Left cardiac atrium (tissue), 4 donors: ENCODE measurements at regions of chr21 and their contacts with region 1.

Region 1: GRCh38 chr21:46144464-46145070 is 10.8 kb downstream of the FTCD start:
- DNase-seq: no peak
- ATAC-seq: no peak

Region 2: GRCh38 chr21:45820171-45821091 is 324.1 kb before region 1 on chr21:
- intact Hi-C with region 1: no loop called
- DNase-seq: peak; percentile 80
- ATAC-seq: peak; percentile 87 to 93

Region 3: GRCh38 chr21:46219591-46220239 is 75.1 kb after region 1 on chr21:
- intact Hi-C with region 1: loop called in 1 of 2 experiments (anchors 5 kb)
- DNase-seq: no peak
- ATAC-seq: peak; percentile 27 to 45

Region 4: DNA sequence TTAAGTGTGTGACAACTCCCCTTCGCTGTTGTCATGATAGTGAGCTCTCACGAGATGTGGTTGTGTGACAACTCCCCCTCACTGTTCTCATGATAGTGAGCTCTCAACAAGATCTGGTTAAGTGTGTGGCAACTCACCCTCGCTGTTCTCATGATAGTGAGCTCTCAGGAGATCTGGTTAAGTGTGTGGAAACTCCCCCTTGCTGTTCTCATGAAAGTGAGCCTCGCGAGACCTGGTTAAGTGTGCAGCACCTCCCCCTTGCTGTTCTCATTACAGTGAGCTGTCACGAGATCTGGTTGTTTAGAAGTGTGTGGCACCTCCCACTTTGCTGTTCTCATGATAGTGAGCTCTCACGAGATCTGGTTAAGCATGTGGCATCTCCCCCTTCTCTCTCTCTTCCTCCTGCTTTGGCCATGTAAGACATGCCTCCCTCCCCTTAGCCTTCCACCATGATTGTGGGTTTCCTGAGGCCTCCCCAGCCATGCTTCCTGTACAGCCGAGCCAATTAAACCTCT is 109.1 kb after region 1 on chr21:
- intact Hi-C with region 1: loop called in 1 of 2 experiments (anchors 10 kb)
- DNase-seq: no peak
- ATAC-seq: peak in 1 of 2 donors; percentile 7